Activated CD4-positive, alpha-beta T cell treated with anti-CD3 and anti-CD28 coated beads for 36 hours (primary cell): ENCODE measurements at regions of chr9 and their contacts with region 1.

Region 1: GRCh38 chr9:1875921-1876448 is 139.2 kb upstream of the SMARCA2 start:
- DNase-seq: peak; percentile 90
- ATAC-seq: peak; percentile 71
- H3K4me3 Mint-ChIP-seq: no peak overlapping the region
- H3K27ac Mint-ChIP-seq: peak overlapping the region; percentile 66
- H3K4me1 Mint-ChIP-seq: peaks cover 40% of the 10 kb centered on the region
- H3K27me3 Mint-ChIP-seq: peaks cover 22% of the 10 kb centered on the region

Region 2: DNA sequence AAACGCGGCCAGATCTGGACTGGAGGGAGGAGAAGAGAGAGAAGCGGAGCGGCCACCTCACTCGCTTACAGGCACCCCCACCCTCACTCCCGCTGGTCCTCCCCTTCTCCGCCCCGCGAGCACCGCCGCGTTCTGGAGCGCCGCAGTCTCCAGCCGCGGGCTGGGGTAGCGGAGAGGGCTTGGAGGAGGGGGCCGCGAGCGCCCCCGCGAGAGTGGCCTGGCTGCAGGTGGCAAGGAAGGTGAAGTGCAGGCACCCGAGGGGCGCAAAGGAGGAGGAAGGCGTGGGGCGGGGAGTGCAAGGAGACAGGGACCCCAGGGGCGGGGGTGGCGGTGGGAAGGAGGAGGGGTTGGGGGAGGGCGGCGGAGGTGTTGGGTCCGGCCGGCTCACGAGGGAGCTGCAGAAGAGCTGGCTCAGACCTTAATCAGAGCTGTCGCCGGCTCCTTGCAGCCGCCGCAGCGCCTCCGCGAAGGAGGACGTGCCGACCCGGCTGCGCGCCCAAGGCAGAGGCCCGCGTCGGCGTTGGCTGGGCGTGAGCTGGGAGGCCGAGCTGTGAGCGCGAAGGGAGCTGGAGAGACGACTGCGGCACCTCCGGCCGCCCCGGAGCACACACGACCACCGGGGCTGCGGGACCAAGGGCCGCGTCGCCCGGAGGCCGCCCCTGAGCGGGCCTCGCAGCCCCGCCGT is 899.6 kb before region 1 on chr9 and contains the start of gene DMRT3:
- CTCF ChIA-PET with region 1: no interaction called
- POLR2A ChIA-PET with region 1: no interaction called
- intact Hi-C with region 1: loop called in 1 of 2 experiments (anchors 5 kb)
- DNase-seq: peak; percentile 32
- ATAC-seq: no peak
- H3K4me3 Mint-ChIP-seq: no peak within 1 kb of the TSS
- H3K27ac Mint-ChIP-seq: no peak within 1 kb of the TSS
- H3K4me1 Mint-ChIP-seq: peaks cover 7% of the 10 kb centered on the region
- H3K27me3 Mint-ChIP-seq: peaks cover 66% of the 10 kb centered on the region
- total RNA-seq, gene DMRT3: not detected

Region 3: GRCh38 chr9:1460143-1460769 is 415.7 kb before region 1 on chr9:
- CTCF ChIA-PET with region 1: no interaction called
- POLR2A ChIA-PET with region 1: no interaction called
- intact Hi-C with region 1: loop called in 1 of 2 experiments (anchors 5 kb)
- DNase-seq: peak; percentile 30
- ATAC-seq: peak; percentile 42
- H3K4me3 Mint-ChIP-seq: no peak overlapping the region
- H3K27ac Mint-ChIP-seq: no peak overlapping the region
- H3K4me1 Mint-ChIP-seq: peaks cover 4% of the 10 kb centered on the region
- H3K27me3 Mint-ChIP-seq: peaks cover 10% of the 10 kb centered on the region

Region 4: DNA sequence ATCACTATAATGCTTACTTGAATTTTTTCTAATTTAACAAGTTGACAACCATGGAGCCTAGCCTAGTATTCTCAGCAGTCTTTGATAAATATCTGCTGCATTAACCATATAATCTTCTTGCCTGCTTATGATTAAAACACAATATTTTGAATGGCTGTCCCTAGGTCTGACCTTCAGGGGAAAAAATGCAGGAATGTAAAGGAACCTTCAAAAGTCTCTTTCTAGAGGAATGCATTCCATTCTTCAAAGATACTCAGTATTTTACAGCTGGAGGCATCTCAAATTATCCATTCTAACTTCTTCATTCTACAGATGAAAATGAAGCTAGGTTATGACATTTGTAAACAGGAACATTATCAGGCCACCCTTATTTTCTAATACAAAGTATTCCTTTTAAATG is 20.0 kb after region 1 on chr9:
- CTCF ChIA-PET with region 1: no interaction called
- POLR2A ChIA-PET with region 1: no interaction called
- intact Hi-C with region 1: no loop called
- DNase-seq: no peak
- ATAC-seq: no peak
- H3K4me3 Mint-ChIP-seq: no peak overlapping the region
- H3K27ac Mint-ChIP-seq: no peak overlapping the region
- H3K4me1 Mint-ChIP-seq: peaks cover 1% of the 10 kb centered on the region
- H3K27me3 Mint-ChIP-seq: peaks cover 18% of the 10 kb centered on the region

Region 5: GRCh38 chr9:1939926-1940368 is 64.0 kb after region 1 on chr9:
- CTCF ChIA-PET with region 1: interaction called, 3 read pairs
- POLR2A ChIA-PET with region 1: no interaction called
- intact Hi-C with region 1: loop called (anchors 5 kb)
- DNase-seq: peak; percentile 62
- ATAC-seq: peak; percentile 83
- H3K4me3 Mint-ChIP-seq: no peak overlapping the region
- H3K27ac Mint-ChIP-seq: no peak overlapping the region
- H3K4me1 Mint-ChIP-seq: no peaks in the 10 kb centered on the region
- H3K27me3 Mint-ChIP-seq: peaks cover 7% of the 10 kb centered on the region

Region 6: GRCh38 chr9:2014696-2015580 is 139.0 kb after region 1 on chr9 and contains the start of gene SMARCA2:
- CTCF ChIA-PET with region 1: no interaction called
- POLR2A ChIA-PET with region 1: interaction called, 5 read pairs
- intact Hi-C with region 1: loop called (anchors 1 kb)
- DNase-seq: peak; percentile 98
- ATAC-seq: peak; percentile 84
- H3K4me3 Mint-ChIP-seq: peak within 1 kb of the TSS; percentile 92
- H3K27ac Mint-ChIP-seq: peak within 1 kb of the TSS; percentile 99
- H3K4me1 Mint-ChIP-seq: peaks cover 45% of the 10 kb centered on the region
- H3K27me3 Mint-ChIP-seq: no peaks in the 10 kb centered on the region
- total RNA-seq, gene SMARCA2: 91.3 to 94.0 TPM

Region 7: DNA sequence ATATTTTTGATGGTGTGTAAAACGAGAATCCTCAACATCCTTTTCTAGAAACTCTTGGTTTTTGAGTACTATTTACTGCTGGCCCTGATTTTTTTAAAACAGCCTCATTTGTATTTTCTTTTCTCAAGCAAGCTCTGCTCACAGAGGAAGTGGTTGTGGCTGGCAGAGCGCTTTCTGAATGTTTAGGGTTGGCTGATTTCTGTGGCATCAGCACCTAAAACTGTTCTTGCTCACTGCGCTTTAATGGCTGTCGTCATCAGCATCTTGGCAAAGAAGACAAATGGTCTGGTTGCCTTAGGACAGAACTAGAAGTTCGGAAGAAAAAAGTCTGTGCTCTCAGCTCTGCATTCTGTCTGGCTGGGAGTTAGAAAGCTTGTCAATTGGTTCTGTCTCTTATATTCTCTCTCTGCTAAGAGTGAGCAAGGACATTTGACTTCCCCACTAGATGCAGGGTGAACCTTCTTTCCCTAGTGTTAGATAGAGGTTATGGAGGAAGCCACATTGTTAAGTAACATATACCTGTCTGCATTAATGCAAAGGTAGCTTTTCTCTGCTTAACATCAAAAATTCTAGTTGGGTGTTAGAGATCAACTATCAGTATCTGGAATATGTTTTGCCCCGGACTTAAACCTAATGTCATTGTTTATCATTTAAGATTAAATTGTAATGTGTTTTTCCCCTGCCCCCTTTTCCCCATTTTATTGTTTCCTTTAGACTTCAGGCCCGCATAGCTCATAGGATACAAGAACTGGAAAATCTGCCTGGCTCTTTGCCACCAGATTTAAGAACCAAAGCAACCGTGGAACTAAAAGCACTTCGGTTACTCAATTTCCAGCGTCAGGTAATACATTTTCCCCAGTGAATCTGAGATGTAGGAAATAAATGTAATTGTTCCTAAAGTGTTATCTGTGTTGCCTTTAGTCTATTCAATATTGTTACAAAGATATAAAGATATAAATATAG is 178.2 kb after region 1 on chr9:
- CTCF ChIA-PET with region 1: interaction called, 4 read pairs
- POLR2A ChIA-PET with region 1: interaction called, 5 read pairs
- intact Hi-C with region 1: loop called (anchors 1 kb)
- DNase-seq: peak; percentile 85
- ATAC-seq: peak; percentile 91
- H3K4me3 Mint-ChIP-seq: peak overlapping the region; percentile 58
- H3K27ac Mint-ChIP-seq: peak overlapping the region; percentile 84
- H3K4me1 Mint-ChIP-seq: peaks cover 52% of the 10 kb centered on the region
- H3K27me3 Mint-ChIP-seq: no peaks in the 10 kb centered on the region

Region 8: DNA sequence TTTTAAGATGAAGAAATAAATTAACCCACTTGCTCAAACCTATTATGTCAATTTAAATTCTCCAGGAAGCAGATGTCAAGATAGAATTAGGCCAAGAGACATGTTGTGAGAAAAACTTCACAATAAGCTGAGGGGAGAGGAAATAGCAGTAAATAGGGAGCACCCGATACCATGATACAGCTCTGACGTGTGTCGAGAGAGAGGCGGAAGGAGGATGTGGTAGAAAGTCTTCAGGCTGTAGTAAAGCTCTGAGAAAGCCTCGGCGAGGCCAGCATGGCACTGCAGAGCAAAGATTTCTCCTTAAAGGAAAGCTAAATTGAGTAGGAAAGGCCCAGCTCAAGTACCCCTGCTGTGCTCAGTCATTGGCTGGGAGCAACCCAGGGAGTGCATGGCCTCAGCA is 974.0 kb after region 1 on chr9:
- CTCF ChIA-PET with region 1: no interaction called
- POLR2A ChIA-PET with region 1: no interaction called
- intact Hi-C with region 1: loop called in 1 of 2 experiments (anchors 2 kb)
- DNase-seq: peak; percentile 20
- ATAC-seq: peak; percentile 57
- H3K4me3 Mint-ChIP-seq: no peak overlapping the region
- H3K27ac Mint-ChIP-seq: no peak overlapping the region
- H3K4me1 Mint-ChIP-seq: peaks cover 11% of the 10 kb centered on the region
- H3K27me3 Mint-ChIP-seq: peaks cover 11% of the 10 kb centered on the region